PC-9 (cell line): ENCODE measurements at regions of chr7 and their contacts with region 1.

Region 1: GRCh38 chr7:86469680-86470295 is 173.9 kb upstream of the GRM3 start:
- DNase-seq: peak; percentile 45 to 56
- H3K4me3 ChIP-seq: no peak overlapping the region
- H3K27ac ChIP-seq: no peak overlapping the region
- H3K4me1 ChIP-seq: no peaks in the 10 kb centered on the region
- H3K27me3 ChIP-seq: no peaks in the 10 kb centered on the region
- CTCF ChIP-seq: peak; percentile 86

Region 2: DNA sequence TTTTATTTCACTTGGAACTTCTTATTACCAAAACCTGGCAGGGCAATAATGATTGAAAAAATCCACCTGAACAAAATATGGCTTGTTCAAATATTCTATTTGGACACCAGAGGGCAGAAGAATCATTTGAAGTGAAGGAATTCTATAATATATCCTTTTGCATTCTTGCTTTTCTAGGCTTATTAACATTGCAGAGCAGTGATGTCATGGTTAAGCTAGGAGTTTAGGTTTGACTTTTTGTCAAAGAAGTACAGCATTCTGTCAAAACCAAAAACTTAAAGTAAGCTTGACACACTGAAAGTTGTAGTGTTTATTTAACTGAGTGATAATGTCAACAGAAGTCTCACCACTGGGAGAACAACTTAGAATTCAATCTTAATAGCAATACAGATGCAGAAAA is 1438.9 kb before region 1 on chr7:
- CTCF ChIA-PET with region 1: no interaction called
- POLR2A ChIA-PET with region 1: no interaction called
- intact Hi-C with region 1: loop called (anchors 2 kb)
- DNase-seq: no peak
- H3K4me3 ChIP-seq: no peak overlapping the region
- H3K27ac ChIP-seq: no peak overlapping the region
- H3K4me1 ChIP-seq: no peaks in the 10 kb centered on the region
- H3K27me3 ChIP-seq: no peaks in the 10 kb centered on the region
- CTCF ChIP-seq: peak; percentile 81

Region 3: DNA sequence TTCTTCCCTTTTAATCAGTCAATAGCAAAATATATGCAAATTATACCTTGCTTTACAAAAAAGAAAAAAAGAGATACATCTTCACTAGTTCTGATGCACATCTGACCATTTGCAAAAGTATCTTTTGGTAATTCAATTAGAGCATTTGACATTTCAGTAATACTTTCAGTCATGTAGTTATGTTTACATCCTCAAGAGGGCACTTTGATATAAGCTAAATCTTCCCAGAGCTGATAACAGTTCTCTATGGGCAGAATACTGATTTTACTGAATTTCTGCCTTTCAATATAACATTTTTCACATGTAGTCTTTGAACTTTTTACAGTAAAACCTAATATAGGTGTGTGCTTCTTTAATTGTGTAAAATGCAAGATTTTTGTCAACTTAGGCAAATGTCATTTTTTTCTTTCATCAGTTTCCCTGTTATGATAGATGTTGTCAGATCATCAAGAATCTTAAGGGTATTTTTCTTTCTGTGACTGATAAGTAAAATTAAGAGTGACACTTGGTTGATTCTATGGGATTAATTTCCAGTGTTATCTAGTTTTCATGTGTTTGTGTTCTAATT is 579.5 kb before region 1 on chr7:
- CTCF ChIA-PET with region 1: interaction called, 3 read pairs
- POLR2A ChIA-PET with region 1: no interaction called
- intact Hi-C with region 1: loop called (anchors 1 kb)
- DNase-seq: no peak
- H3K4me3 ChIP-seq: no peak overlapping the region
- H3K27ac ChIP-seq: no peak overlapping the region
- H3K4me1 ChIP-seq: no peaks in the 10 kb centered on the region
- H3K27me3 ChIP-seq: no peaks in the 10 kb centered on the region
- CTCF ChIP-seq: peak; percentile 80